ENCODE measurements at regions of chr1 and their contacts with region 1.

Region 1: DNA sequence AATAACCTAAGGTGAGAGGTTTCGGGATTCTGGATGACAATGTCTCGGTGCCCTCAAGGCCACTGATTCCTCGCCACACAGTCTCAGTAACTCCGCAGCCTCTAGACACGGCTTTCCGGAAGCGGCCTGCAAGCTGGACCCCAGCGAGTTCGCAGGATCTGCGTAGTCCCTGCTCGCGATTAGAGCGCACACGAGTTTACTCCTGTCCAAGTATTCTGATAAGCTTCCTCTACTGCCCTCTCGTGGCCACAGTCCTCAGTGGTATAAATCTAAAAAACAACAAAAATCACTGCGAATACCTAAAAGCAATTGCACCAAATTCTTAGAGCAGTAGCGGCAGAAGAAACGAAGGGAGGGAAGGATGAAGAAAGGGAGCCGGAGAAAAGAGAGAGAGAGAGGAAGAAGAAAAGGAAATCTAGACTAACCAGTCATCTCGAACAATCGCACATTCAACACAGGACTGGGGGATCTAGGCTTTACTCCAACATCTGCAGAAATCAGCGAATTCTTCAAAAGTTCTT is 1.1 kb upstream of the PLXNA2 start:
- DNase-seq: peak; percentile 75
- H3K4me3 ChIP-seq: peak overlapping the region; percentile 1 to 85 (median 24)
- H3K27ac ChIP-seq: no peak overlapping the region
- H3K4me1 ChIP-seq: peaks cover 31% of the 10 kb centered on the region
- H3K27me3 ChIP-seq: peaks cover 3% of the 10 kb centered on the region
- CTCF ChIP-seq: peak; percentile 64 to 74

Region 2: GRCh38 chr1:207885129-207886032 is 359.9 kb before region 1 on chr1:
- CTCF ChIA-PET with region 1: no interaction called
- dilution Hi-C with region 1: no loop called
- in situ Hi-C with region 1: no loop called
- intact Hi-C with region 1: loop called (anchors 5 kb)
- DNase-seq: peak; percentile 46
- H3K4me3 ChIP-seq: no peak overlapping the region
- H3K27ac ChIP-seq: no peak overlapping the region
- H3K4me1 ChIP-seq: peaks cover 15% of the 10 kb centered on the region
- H3K27me3 ChIP-seq: no peaks in the 10 kb centered on the region
- CTCF ChIP-seq: peak; percentile 93 to 94

Region 3: GRCh38 chr1:208036109-208036808 is 209.0 kb before region 1 on chr1:
- CTCF ChIA-PET with region 1: no interaction called
- dilution Hi-C with region 1: no loop called
- in situ Hi-C with region 1: no loop called
- intact Hi-C with region 1: loop called (anchors 2 kb)
- DNase-seq: no peak
- H3K4me3 ChIP-seq: no peak overlapping the region
- H3K27ac ChIP-seq: no peak overlapping the region
- H3K4me1 ChIP-seq: no peaks in the 10 kb centered on the region
- H3K27me3 ChIP-seq: no peaks in the 10 kb centered on the region
- CTCF ChIP-seq: peak in 1 of 2 donors; percentile 26

Region 4: DNA sequence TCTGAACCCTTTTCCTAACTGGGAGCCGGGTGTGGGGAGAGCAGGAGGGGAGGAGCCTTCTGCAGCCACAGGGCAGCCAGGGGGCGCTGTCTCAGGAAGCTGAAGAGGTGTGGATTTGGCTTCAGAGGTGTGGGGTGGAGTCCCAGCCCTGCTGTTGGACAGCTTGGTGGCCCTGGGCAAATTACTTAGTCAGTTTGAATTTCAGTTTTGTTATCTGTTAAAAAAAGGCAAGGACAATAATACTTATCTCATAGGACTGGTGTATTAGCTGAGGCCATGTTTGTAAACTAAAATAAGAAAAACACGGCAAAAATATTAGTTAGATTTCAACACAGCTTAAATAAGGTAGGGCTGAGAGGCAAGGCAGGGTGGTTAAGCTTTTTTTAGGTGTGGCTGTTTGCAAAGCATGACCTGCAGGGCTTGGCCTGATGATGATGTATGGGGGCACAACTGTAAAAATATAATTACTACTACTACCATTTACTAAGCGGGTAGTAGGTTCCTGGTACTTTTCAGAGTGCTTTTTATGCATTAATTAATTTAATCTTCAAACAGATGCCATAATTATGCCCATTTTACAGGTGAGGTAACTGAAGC is 112.9 kb before region 1 on chr1:
- CTCF ChIA-PET with region 1: interaction called, 5 read pairs
- dilution Hi-C with region 1: no loop called
- in situ Hi-C with region 1: loop called (anchors 10 kb)
- intact Hi-C with region 1: loop called (anchors 1 kb)
- DNase-seq: peak; percentile 77
- H3K4me3 ChIP-seq: no peak overlapping the region
- H3K27ac ChIP-seq: peak overlapping the region; percentile 35
- H3K4me1 ChIP-seq: peaks cover 7% of the 10 kb centered on the region
- H3K27me3 ChIP-seq: no peaks in the 10 kb centered on the region
- CTCF ChIP-seq: peak; percentile 92 to 93

Region 5: DNA sequence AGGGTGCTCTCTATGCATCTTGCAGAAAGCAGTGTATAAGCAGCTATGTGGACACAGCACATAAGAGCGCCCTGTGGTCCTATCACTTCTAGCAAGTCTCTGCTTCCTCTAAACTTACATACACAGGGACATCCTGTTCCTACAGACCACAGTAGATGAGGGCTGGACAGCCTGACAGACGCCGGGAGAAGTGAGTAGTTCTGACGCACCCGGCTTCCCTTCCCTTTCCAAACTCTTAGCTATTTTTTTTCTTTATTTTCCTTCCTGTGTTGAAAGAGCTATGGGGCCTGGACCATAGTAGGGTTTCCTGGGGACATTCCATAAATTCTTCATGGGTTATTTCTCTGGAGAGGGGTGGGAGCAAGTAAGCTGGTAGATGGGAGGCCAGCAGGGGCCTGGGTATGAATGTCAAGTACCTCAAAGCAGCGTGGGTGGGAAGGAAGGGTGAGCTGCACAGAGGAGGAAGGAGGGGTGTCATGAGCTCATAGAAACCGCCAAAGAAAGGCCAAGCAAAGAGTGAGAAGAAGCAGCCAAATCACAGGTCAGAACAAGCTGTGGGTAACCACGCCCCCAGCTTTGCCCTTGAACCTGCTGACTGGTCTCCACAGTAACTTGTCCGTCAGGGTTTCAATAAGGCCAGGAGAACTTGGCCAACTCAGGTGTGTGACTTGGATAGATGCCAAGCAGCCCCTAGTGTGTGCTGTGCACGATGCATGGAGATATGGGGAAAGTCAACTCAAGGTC is 37.7 kb before region 1 on chr1:
- CTCF ChIA-PET with region 1: interaction called, 10 read pairs
- dilution Hi-C with region 1: no loop called
- in situ Hi-C with region 1: no loop called
- intact Hi-C with region 1: loop called (anchors 1 kb)
- DNase-seq: peak; percentile 99
- H3K4me3 ChIP-seq: no peak overlapping the region
- H3K27ac ChIP-seq: peak overlapping the region; percentile 66
- H3K4me1 ChIP-seq: peaks cover 69% of the 10 kb centered on the region
- H3K27me3 ChIP-seq: no peaks in the 10 kb centered on the region
- CTCF ChIP-seq: no peak